Tibial artery (tissue), 4 donors: ENCODE measurements at regions of chr11 and their contacts with region 1.

Region 1: DNA sequence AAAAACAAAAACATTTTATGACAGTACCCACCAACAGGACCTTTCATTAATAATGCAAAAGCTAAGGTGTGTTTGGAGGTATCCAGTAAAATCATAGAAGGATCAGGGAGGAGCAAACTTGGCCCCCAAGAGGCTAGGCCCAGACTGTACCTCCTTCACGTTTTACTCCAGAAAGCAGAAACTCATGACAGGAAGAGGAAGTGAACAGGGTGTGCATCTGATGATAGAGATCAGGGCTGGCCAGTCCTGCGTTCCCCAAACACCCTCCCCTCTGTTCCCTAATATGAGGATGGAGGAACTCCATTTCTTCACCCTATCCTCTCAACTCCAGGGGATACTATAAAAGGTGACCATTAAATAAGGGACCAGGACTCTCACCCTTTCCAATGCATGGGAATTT is 10.2 kb upstream of the MS4A12 start:
- DNase-seq: no peak
- H3K4me3 ChIP-seq: no peak overlapping the region
- H3K27ac ChIP-seq: no peak overlapping the region
- H3K4me1 ChIP-seq: no peaks in the 10 kb centered on the region
- H3K27me3 ChIP-seq: no peaks in the 10 kb centered on the region
- CTCF ChIP-seq: no peak

Region 2: GRCh38 chr11:59967677-59968394 is 514.5 kb before region 1 on chr11:
- intact Hi-C with region 1: loop called (anchors 5 kb)
- DNase-seq: no peak
- H3K4me3 ChIP-seq: no peak overlapping the region
- H3K27ac ChIP-seq: no peak overlapping the region
- H3K4me1 ChIP-seq: no peaks in the 10 kb centered on the region
- H3K27me3 ChIP-seq: no peaks in the 10 kb centered on the region
- CTCF ChIP-seq: no peak